ENCODE measurements at regions of chr7 and their contacts with region 1.

Region 1: DNA sequence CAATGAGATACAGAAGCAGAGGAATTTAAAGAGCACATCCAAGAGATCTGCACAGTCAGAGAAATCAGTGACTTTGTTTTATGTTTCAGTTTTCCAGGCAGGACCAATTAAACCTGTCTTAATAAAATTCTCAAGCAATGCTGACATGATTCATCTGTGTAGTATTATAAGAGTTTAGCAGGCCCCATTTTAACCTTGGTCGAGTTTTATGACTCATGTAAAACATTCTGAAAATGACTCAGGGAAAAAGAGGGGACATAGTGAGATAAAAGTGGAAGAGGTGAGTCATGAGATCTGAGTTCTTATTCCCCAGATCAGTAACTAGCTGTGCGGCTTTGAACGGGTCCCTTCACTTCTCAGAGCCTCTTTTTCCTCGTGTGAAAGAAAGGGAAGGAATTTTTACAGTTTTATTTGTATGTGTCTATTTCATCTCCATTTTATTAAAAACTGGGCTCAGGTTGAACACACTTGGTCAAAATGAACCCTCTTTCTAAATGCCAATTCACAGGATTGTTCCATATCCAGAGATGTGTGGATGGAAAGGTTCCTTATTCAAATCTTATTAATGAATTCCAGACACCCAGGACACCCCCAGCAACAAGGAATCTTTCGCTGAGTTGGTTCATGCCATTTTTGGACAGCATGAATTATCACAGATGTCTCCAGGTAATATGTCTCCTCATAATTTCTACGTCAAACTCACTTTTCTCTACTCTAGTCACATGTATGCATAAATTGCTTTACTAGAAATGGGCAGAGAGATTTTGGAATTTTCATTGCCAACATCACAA is 143.2 kb downstream of the JAZF1 start:
- DNase-seq: peak; percentile 90
- H3K4me3 ChIP-seq: no peak overlapping the region
- CTCF ChIP-seq: no peak

Region 2: DNA sequence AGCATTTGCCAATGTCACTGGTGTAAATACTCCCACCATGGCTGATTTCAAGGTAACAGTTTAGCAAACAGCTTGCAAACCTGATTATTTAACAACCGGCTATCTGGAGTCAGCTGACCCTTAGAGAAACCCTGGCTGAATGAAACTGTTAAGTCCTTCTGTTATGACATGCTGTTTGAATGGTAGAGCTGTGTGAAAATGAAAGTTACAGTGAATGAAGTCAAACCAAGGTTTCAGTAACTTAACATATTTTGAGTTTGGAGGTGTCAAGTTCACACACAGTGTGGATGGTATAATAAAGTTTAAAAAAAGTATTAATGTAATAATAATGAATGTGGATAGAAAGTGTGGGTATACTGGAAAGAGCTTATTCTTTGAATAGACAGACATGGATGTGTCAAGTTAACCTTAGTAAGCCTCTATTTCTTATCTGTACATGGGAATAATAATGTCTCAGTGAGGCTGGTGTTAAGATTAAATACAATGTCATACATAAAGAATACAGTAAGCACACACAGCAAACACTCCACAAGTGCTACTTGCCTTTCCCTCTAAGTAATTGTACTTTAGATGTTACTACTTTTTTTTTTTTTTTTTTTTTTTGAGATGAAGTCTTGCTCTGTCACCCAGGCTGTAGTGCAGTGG is 147.1 kb before region 1 on chr7:
- CTCF ChIA-PET with region 1: no interaction called
- POLR2A ChIA-PET with region 1: no interaction called
- DNase-seq: no peak
- H3K4me3 ChIP-seq: no peak overlapping the region
- CTCF ChIP-seq: no peak

Region 3: DNA sequence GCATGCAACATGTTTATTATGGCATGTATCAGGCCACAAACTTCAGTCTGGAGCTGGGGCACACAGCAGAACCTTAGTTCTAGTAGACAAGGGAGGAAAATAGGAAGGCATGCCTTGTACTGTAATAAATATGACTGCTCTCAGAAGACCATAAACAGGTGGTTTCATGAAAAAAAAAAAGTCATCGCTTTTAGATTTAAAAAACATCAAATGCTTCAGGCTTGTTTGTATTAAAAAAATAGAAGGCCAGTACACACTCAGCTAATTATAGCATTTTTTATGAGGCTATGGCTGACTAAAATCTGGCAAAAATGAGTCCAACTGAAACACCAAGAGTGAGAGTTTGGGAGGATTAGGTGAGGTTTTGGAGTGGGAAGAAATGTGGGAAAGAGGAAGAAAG is 60.9 kb before region 1 on chr7:
- CTCF ChIA-PET with region 1: no interaction called
- POLR2A ChIA-PET with region 1: no interaction called
- DNase-seq: no peak
- H3K4me3 ChIP-seq: no peak overlapping the region
- CTCF ChIP-seq: no peak

Region 4: GRCh38 chr7:28020302-28020940 is 17.0 kb before region 1 on chr7:
- CTCF ChIA-PET with region 1: interaction called, 19 read pairs
- POLR2A ChIA-PET with region 1: no interaction called
- DNase-seq: no peak
- H3K4me3 ChIP-seq: no peak overlapping the region
- CTCF ChIP-seq: peak; percentile 80

Region 5: DNA sequence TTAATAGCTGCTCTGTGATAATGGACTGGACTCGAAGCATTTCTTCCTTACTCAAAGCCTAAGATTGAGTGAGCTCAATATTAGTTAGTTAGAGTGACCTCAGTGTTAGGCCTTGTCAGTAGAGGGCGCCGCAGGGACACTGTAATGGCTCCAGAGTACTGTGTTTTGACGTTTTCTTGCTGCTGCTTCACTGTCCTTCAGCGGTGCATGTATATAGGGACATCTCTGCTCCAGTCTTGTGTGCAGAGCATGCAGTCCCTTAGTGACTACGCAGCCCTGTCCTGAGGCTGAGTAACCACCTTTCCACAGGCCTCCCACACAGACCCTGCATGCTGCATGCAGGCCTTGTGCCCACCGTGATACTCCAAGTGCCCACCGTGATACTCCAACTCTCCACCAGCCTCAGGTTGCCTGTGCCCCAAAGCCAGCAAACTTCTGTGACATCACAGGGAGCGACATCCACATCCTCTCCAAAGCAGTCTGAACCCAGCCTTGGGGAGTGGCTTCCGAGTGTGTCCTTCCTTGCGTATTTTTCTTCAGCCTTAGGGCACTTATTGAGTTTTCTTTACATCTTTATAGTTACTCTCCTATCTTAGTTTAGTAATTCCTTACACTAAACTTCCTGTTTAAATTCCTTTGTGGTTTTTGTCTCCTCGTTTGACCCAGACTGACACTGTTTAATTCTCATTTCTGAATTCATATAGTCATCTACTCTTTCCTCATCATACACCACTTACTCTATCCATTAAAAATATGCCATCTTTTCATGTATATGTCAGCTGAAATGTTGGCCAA is 25.0 kb after region 1 on chr7:
- CTCF ChIA-PET with region 1: interaction called, 13 read pairs
- POLR2A ChIA-PET with region 1: no interaction called
- DNase-seq: no peak
- H3K4me3 ChIP-seq: no peak overlapping the region
- CTCF ChIP-seq: peak; percentile 64

Region 6: DNA sequence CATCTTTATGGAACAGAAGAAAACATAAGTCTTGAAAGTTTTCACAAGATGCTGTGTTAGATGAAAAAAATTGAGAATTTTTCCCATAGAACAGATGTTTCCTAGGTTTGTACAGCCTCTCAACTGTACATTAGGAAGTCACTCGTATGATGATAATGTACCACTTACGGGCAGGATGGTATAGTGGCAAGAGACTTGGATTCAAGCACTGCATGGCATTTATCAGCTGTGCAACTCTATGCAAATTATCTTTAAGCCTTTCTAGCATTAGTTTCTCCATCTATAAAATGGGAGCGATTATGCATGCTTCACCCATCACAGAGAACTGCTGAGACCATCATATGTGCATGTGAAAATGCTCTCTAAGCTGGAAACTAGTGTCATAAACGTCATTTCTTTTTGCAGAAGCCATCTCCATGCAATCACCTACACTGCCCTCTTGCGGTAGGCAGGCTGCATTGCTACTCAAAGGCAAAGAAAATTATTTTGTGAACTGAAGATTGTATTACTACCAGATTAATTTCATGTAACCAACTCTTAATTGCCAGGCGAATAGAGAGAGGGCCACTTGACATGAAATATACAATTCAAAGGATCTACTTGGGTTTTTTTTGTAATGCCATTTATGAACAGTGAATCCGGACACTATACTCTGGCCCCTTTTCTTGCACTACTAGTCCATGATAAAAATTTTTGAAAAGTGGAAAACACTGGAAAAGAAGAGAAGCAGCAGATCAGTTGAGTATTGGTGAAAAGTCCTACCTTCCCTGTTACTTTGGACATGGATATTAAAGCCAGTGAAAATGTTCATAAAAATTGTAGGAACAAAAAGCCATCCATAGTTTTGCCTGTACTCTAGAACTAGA is 40.9 kb after region 1 on chr7:
- CTCF ChIA-PET with region 1: interaction called, 12 read pairs
- POLR2A ChIA-PET with region 1: no interaction called
- DNase-seq: no peak
- H3K4me3 ChIP-seq: no peak overlapping the region
- CTCF ChIP-seq: peak; percentile 86